ENCODE measurements at regions of chr2 and their contacts with region 1.

Region 1: GRCh38 chr2:101770726-101771125 is 73.2 kb downstream of the MAP4K4 start:
- DNase-seq: peak; percentile 82
- ATAC-seq: peak; percentile 17
- H3K4me3 ChIP-seq: no peak overlapping the region; a peak in 1 of 6 replicates
- H3K27ac ChIP-seq: peak overlapping the region; percentile 65
- H3K4me1 ChIP-seq: peaks cover 100% of the 10 kb centered on the region
- H3K27me3 ChIP-seq: no peaks in the 10 kb centered on the region
- CTCF ChIP-seq: peak; percentile 80
- EP300 ChIP-seq: no peak
- POLR2A ChIP-seq: no peak
- RAD21 ChIP-seq: peak; percentile 58; the same call in 1 of the 2 replicates

Region 2: GRCh38 chr2:101328474-101329007 is 442.2 kb before region 1 on chr2:
- CTCF ChIA-PET with region 1: no interaction called
- POLR2A ChIA-PET with region 1: no interaction called
- in situ Hi-C with region 1: no loop called
- intact Hi-C with region 1: loop called (anchors 5 kb)
- DNase-seq: no peak
- ATAC-seq: no peak
- H3K4me3 ChIP-seq: no peak overlapping the region
- H3K27ac ChIP-seq: no peak overlapping the region
- H3K4me1 ChIP-seq: peaks cover 59% of the 10 kb centered on the region
- H3K27me3 ChIP-seq: no peaks in the 10 kb centered on the region
- CTCF ChIP-seq: no peak
- EP300 ChIP-seq: no peak
- POLR2A ChIP-seq: no peak
- RAD21 ChIP-seq: no peak

Region 3: DNA sequence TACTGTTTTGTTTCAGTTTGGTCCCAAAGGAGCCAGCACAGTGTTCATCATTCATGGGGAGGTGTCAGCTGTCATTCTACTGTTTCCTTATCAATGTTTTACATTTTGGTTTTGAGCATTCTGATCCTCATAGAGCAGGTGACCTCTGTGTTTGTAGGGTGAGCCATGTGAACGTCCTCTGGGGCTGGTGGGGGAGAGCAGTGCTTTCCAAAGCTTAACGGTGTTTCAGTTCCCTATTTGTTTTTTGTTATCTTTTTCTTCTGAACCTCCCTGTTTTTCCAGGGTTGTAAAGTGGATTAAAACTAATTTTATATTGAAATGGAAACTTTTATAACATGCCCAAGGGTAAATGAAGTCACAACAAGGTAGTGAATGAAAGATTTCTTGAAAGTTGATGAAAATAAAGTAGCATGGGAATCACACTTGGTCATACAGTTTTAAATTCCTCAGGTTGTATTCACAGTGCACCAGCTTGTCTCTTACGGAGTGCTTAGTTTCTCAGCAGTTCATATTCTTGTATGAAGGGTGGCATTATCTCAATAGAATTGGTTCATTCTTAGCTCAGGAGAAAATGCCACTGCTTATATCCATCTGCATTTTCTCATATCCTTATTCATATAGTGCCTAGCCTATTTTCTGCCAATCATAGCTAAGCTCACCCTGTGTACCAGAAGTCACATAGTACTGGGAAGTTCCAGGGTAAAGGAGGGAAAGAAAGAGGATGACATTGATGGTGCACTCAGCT is 18.7 kb before region 1 on chr2:
- CTCF ChIA-PET with region 1: no interaction called
- POLR2A ChIA-PET with region 1: interaction called, 11 read pairs
- in situ Hi-C with region 1: no loop called
- intact Hi-C with region 1: no loop called
- DNase-seq: peak; percentile 69
- ATAC-seq: peak; percentile 61
- H3K4me3 ChIP-seq: peak overlapping the region in 1 of 3 experiments; percentile 18; a peak in 1 of 6 replicates
- H3K27ac ChIP-seq: peak overlapping the region; percentile 30
- H3K4me1 ChIP-seq: peaks cover 81% of the 10 kb centered on the region
- H3K27me3 ChIP-seq: no peaks in the 10 kb centered on the region
- CTCF ChIP-seq: no peak
- EP300 ChIP-seq: peak in 1 of 2 experiments; percentile 79; a peak in 2 of 4 replicates
- POLR2A ChIP-seq: no peak
- RAD21 ChIP-seq: no peak

Region 4: GRCh38 chr2:101802329-101802728 is 31.6 kb after region 1 on chr2:
- CTCF ChIA-PET with region 1: no interaction called
- POLR2A ChIA-PET with region 1: no interaction called
- in situ Hi-C with region 1: no loop called
- intact Hi-C with region 1: loop called (anchors 2 kb)
- DNase-seq: peak; percentile 77
- ATAC-seq: peak; percentile 77
- H3K4me3 ChIP-seq: no peak overlapping the region
- H3K27ac ChIP-seq: peak overlapping the region; percentile 9
- H3K4me1 ChIP-seq: peaks cover 68% of the 10 kb centered on the region
- H3K27me3 ChIP-seq: no peaks in the 10 kb centered on the region
- CTCF ChIP-seq: no peak
- EP300 ChIP-seq: no peak
- POLR2A ChIP-seq: no peak
- RAD21 ChIP-seq: no peak

Region 5: GRCh38 chr2:101831351-101831865 is 60.7 kb after region 1 on chr2:
- CTCF ChIA-PET with region 1: interaction called, 16 read pairs
- POLR2A ChIA-PET with region 1: interaction called, 5 read pairs
- in situ Hi-C with region 1: no loop called
- intact Hi-C with region 1: loop called (anchors 2 kb)
- DNase-seq: peak; percentile 77
- ATAC-seq: peak; percentile 92
- H3K4me3 ChIP-seq: no peak overlapping the region
- H3K27ac ChIP-seq: peak overlapping the region; percentile 3
- H3K4me1 ChIP-seq: peaks cover 50% of the 10 kb centered on the region
- H3K27me3 ChIP-seq: no peaks in the 10 kb centered on the region
- CTCF ChIP-seq: peak; percentile 87
- EP300 ChIP-seq: no peak
- POLR2A ChIP-seq: no peak
- RAD21 ChIP-seq: peak; percentile 71